ENCODE measurements at regions of chr10 and their contacts with region 1.

Region 1: GRCh38 chr10:22704471-22704911 is 9.9 kb downstream of the PIP4K2A start:
- DNase-seq: no peak
- H3K4me3 Mint-ChIP-seq: no peak overlapping the region
- H3K27ac Mint-ChIP-seq: no peak overlapping the region
- H3K4me1 Mint-ChIP-seq: peaks cover 23% of the 10 kb centered on the region
- H3K27me3 Mint-ChIP-seq: no peaks in the 10 kb centered on the region
- CTCF ChIP-seq: no peak

Region 2: GRCh38 chr10:22655311-22655981 is 49.0 kb before region 1 on chr10:
- CTCF ChIA-PET with region 1: no interaction called
- intact Hi-C with region 1: loop called (anchors 5 kb)
- DNase-seq: peak; percentile 36
- H3K4me3 Mint-ChIP-seq: no peak overlapping the region
- H3K27ac Mint-ChIP-seq: no peak overlapping the region
- H3K4me1 Mint-ChIP-seq: peaks cover 26% of the 10 kb centered on the region
- H3K27me3 Mint-ChIP-seq: no peaks in the 10 kb centered on the region
- CTCF ChIP-seq: no peak

Region 3: GRCh38 chr10:22723343-22723779 is 18.9 kb after region 1 on chr10:
- CTCF ChIA-PET with region 1: no interaction called
- intact Hi-C with region 1: no loop called
- DNase-seq: no peak
- H3K4me3 Mint-ChIP-seq: no peak overlapping the region
- H3K27ac Mint-ChIP-seq: no peak overlapping the region
- H3K4me1 Mint-ChIP-seq: peaks cover 8% of the 10 kb centered on the region
- H3K27me3 Mint-ChIP-seq: no peaks in the 10 kb centered on the region
- CTCF ChIP-seq: no peak

Measured in Calu3 (cell line).